ENCODE measurements at regions of chr11 and their contacts with region 1.

Region 1: DNA sequence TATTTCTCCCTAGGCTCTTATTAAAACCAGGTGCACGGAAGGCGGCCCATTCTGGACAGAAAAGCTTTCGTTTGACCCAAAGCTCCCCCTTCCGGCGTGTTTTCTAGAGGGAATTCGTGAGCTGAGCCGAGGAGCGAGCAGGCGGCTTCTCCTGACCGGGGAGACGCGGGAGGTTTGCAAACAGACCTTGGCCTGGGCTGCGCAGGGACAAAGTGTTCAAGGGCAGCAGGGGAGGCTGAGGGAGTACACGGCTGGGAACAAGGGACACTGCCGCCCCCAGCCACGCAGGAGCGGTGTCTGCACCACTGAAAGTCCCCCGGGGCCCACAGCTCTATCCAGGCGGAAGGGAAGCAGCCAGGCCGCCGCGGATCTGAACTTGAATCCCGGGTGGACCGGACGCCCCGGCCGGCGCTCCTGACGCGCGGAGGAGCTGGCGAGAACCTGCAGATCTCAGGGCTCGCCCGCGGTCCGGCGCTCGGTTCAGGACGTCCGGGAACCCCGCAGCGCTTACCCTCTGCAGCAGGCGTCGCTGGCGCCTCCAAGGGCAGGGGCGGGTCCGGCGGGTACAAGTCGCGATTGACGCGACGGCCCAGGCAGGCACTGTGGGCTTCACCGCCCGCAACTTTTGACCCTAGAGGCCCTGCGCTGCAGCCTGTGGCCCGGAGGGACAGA is 101.9 kb downstream of the WT1 start:
- DNase-seq: peak; percentile 51
- ATAC-seq: peak; percentile 65
- H3K4me3 Mint-ChIP-seq: peak overlapping the region; percentile 56
- H3K27ac Mint-ChIP-seq: no peak overlapping the region
- H3K4me1 Mint-ChIP-seq: peaks cover 11% of the 10 kb centered on the region
- H3K27me3 Mint-ChIP-seq: peaks cover 39% of the 10 kb centered on the region
- CTCF ChIP-seq: peak; percentile 25

Region 2: DNA sequence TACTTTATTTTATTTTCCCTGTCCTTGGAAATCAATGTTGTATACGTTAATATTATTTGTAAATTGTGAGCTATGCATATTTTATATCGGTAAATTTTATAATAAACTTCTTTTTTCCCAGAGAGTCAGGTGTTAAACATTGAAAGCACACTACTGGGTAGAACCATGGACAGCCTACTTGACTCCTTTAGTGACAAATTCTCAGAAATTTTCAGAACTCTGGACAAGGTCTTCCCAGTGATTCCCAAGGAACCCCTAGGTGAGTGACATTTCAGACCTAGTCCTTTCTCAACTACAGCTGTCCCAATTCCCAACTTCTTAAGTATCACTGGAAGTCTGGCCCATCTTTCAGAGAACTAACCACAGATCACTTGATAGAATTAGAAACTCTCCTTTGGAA is 135.4 kb before region 1 on chr11:
- CTCF ChIA-PET with region 1: no interaction called
- POLR2A ChIA-PET with region 1: no interaction called
- intact Hi-C with region 1: no loop called
- DNase-seq: no peak
- ATAC-seq: no peak
- H3K4me3 Mint-ChIP-seq: no peak overlapping the region
- H3K27ac Mint-ChIP-seq: no peak overlapping the region
- H3K4me1 Mint-ChIP-seq: no peaks in the 10 kb centered on the region
- H3K27me3 Mint-ChIP-seq: peaks cover 12% of the 10 kb centered on the region
- CTCF ChIP-seq: no peak

Region 3: GRCh38 chr11:32343325-32344008 is 10.0 kb after region 1 on chr11:
- CTCF ChIA-PET with region 1: interaction called, 11 read pairs
- POLR2A ChIA-PET with region 1: no interaction called
- intact Hi-C with region 1: no loop called
- DNase-seq: no peak
- ATAC-seq: peak; percentile 71
- H3K4me3 Mint-ChIP-seq: no peak overlapping the region
- H3K27ac Mint-ChIP-seq: no peak overlapping the region
- H3K4me1 Mint-ChIP-seq: peaks cover 8% of the 10 kb centered on the region
- H3K27me3 Mint-ChIP-seq: peaks cover 3% of the 10 kb centered on the region
- CTCF ChIP-seq: no peak

Region 4: DNA sequence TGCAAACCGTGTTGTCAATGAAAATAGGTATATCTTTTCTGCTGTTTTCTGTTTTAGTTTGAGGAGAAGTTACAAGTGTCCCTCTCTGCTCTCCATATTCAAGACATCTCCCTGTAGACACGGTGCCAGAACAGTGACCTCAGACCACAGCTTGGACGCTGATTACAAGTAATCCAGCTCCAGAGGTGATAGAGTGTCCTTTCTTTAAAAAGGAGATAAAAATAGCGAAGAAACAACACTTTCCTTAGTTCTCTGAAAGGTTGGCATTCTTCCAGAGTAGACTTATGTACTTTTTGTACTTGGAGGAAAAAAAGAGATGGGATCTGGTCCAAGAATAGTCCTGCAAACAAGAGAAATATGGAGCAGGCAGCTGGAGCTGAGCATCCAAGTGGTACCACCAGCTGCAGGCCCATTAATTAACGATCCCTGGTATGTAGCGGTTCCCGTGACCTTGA is 144.8 kb after region 1 on chr11:
- CTCF ChIA-PET with region 1: no interaction called
- POLR2A ChIA-PET with region 1: no interaction called
- intact Hi-C with region 1: no loop called
- DNase-seq: no peak
- ATAC-seq: no peak
- H3K4me3 Mint-ChIP-seq: no peak overlapping the region
- H3K27ac Mint-ChIP-seq: no peak overlapping the region
- H3K4me1 Mint-ChIP-seq: no peaks in the 10 kb centered on the region
- H3K27me3 Mint-ChIP-seq: no peaks in the 10 kb centered on the region
- CTCF ChIP-seq: no peak

Region 5: DNA sequence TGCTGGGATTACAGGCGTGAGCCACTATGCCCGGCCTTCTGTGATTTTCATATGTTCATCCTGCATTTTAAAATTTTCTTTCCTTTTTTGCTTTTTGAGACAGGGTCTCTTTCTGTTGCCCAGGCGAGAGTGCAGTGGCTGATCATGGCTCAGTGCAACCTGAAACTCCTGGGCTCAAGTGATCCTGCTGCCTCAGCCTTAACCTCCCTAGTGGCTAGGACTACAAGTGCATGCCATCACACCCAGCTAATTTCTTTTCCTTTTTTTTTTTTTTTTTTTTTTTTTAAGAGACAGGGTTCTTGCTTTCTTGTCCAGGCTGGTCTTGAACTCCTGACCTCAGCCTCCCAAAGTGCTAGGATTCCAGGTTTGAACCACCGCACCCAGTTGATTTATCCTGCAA is 156.0 kb after region 1 on chr11:
- CTCF ChIA-PET with region 1: no interaction called
- POLR2A ChIA-PET with region 1: no interaction called
- intact Hi-C with region 1: no loop called
- DNase-seq: no peak
- ATAC-seq: no peak
- H3K4me3 Mint-ChIP-seq: no peak overlapping the region
- H3K27ac Mint-ChIP-seq: no peak overlapping the region
- H3K4me1 Mint-ChIP-seq: no peaks in the 10 kb centered on the region
- H3K27me3 Mint-ChIP-seq: no peaks in the 10 kb centered on the region
- CTCF ChIP-seq: no peak